Colonic mucosa (tissue), 4 donors: ENCODE measurements at regions of chr17 and their contacts with region 1.

Region 1: DNA sequence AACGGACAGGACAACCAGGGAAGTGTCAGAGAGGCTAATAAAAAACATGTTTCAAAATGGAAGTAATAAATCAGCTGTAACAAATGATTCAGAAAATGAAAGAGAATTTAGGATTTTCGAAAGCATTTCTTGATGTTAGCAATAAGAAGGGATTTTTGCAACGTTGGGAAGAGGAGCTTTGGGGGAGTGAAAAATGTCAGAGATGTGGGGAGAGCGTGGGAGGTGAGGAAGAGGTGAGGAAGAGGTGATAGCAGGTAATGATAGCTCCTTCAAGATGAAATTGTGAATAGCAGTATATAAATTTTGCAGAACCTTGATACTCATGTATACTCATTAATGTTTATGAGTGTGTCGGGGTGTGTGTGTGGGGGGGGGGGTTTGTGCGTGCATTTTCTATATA is 76.2 kb upstream of the COX10 start:
- DNase-seq: no peak
- H3K4me3 ChIP-seq: no peak overlapping the region
- H3K27ac ChIP-seq: no peak overlapping the region
- H3K4me1 ChIP-seq: no peaks in the 10 kb centered on the region
- H3K27me3 ChIP-seq: no peaks in the 10 kb centered on the region
- CTCF ChIP-seq: no peak

Region 2: GRCh38 chr17:13843862-13844635 is 149.1 kb before region 1 on chr17:
- intact Hi-C with region 1: no loop called
- DNase-seq: no peak
- H3K4me3 ChIP-seq: no peak overlapping the region
- H3K27ac ChIP-seq: no peak overlapping the region
- H3K4me1 ChIP-seq: no peaks in the 10 kb centered on the region
- H3K27me3 ChIP-seq: no peaks in the 10 kb centered on the region
- CTCF ChIP-seq: no peak

Region 3: DNA sequence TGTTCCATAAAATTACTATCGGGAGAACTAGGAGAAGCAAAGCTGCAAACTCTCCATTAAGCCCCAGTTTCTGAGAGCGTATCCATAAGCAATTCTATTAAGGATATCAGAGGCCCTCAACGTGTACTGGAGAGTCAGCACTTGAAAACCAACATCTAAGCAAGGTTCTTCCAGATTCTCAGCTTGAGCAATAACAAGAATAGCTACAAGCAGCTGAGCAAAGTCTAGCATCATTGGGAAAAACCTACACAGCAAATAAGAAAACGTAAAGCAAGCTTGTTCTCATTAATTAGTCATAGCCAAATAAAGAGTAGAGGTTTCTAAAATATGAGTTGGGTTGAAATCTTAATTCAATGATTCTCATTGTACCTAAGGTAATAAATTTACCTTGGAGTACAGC is 49.3 kb after region 1 on chr17:
- intact Hi-C with region 1: loop called (anchors 5 kb)
- DNase-seq: no peak
- H3K4me3 ChIP-seq: no peak overlapping the region
- H3K27ac ChIP-seq: no peak overlapping the region
- H3K4me1 ChIP-seq: no peaks in the 10 kb centered on the region
- H3K27me3 ChIP-seq: no peaks in the 10 kb centered on the region
- CTCF ChIP-seq: no peak